ENCODE measurements at regions of chr5 and their contacts with region 1.

Region 1: DNA sequence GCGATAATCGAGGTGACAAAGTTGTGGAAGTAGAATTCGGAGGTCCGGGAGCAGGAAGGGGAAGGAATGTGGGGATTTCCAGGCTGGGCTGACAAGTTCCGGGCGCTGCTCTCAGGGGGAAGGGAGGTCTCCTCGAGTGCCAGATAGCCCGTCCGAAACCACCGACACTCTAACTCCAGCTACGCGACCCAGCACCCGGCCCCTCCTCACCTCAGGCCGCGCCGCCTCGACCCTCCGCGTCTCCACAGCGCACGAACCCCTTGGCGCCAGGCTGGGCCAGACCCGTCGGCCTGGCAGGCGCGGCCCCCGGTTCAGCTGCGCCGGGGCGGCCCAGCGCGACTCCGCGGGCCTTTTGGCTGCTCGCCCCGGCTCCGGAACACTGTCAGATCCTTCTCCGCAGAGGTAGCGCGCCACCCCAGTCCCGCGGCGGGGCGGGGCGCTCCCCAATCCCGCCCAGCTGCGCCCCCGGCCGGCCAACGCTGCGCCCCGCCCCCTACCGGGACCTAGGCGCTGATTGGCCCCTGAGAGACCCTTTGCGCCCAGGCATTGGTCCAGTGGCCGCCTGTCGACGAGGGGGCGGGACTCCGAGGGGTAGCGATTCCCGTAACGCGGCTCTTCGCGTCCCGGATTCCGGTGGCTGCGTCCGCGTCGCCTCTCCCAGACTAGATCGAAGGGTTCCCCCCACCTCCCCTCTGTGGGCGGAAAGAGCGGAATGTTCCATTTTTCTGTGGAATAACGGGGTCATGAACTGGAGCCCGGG is at the start of gene IL6ST:
- DNase-seq: peak; percentile 98
- ATAC-seq: peak; percentile 90
- H3K4me3 Mint-ChIP-seq: peak within 1 kb of the TSS; percentile 86
- H3K27ac Mint-ChIP-seq: peak within 1 kb of the TSS; percentile 97
- H3K4me1 Mint-ChIP-seq: peaks cover 60% of the 10 kb centered on the region
- H3K27me3 Mint-ChIP-seq: no peaks in the 10 kb centered on the region
- total RNA-seq, gene IL6ST: 57.1 to 64.4 TPM

Region 2: DNA sequence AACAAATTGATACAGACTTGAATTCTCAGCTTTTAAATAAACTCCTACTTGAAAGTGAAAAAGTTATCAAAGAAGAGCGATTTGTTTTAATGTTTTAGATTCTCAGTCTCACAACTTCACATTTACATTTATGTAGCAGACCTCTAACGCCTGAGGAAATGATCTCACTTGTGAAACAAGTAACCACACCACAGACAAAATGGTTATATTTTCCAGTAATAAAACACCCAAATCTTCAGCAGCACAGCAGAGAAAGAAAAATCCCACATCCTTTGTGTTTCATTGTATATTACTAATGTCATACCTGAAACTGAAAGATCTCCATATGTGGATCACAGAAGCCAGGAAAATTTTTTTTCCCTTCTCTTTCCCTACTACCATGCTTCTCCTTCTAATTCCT is 922.1 kb before region 1 on chr5:
- CTCF ChIA-PET with region 1: no interaction called
- POLR2A ChIA-PET with region 1: no interaction called
- intact Hi-C with region 1: loop called in 1 of 2 experiments (anchors 10 kb)
- DNase-seq: no peak
- ATAC-seq: peak; percentile 83
- H3K4me3 Mint-ChIP-seq: peak overlapping the region; percentile 23
- H3K27ac Mint-ChIP-seq: peak overlapping the region; percentile 52
- H3K4me1 Mint-ChIP-seq: peaks cover 33% of the 10 kb centered on the region
- H3K27me3 Mint-ChIP-seq: peaks cover 2% of the 10 kb centered on the region

Region 3: DNA sequence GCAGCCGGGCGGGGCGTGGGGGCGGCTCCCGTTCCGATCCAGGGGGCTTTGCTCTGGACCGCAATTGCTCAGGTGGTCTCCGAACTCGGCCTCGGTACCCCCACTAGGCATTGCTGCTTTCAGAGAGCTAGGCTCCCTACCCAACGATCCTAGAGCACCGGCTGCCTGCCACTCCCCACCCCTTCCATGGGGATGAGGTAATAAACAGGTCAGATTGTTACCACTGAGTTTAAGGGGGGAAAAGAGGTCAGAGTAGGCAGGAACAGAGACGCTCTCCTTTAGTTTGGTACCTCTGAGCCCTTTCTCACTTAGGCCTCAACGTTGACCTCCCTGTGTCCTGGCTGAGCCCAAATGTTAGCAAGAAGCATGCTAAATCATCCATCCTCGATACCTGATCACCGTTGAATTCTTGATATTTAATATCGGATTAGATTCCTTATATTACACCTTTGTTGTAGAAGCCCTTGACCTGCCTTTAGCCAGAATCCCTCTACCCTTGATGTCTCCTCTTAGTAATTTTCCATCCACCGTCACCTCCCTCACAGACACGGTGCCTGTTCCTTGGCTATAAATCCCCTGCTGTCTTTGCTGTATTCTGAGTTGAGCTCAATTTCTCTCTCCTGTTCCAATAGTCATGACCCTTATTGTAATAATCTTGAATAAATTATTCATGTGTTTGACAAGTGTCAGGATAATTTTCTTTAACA is 459.4 kb before region 1 on chr5:
- CTCF ChIA-PET with region 1: no interaction called
- POLR2A ChIA-PET with region 1: no interaction called
- intact Hi-C with region 1: no loop called
- DNase-seq: no peak
- ATAC-seq: peak; percentile 9
- H3K4me3 Mint-ChIP-seq: peak overlapping the region; percentile 79
- H3K27ac Mint-ChIP-seq: peak overlapping the region; percentile 88
- H3K4me1 Mint-ChIP-seq: peaks cover 32% of the 10 kb centered on the region
- H3K27me3 Mint-ChIP-seq: no peaks in the 10 kb centered on the region

Region 4: GRCh38 chr5:55711968-55712859 is 282.5 kb before region 1 on chr5 and contains the start of gene SLC38A9:
- CTCF ChIA-PET with region 1: no interaction called
- POLR2A ChIA-PET with region 1: no interaction called
- intact Hi-C with region 1: loop called in 1 of 2 experiments (anchors 1 kb)
- DNase-seq: peak; percentile 97
- ATAC-seq: peak; percentile 100
- H3K4me3 Mint-ChIP-seq: peak within 1 kb of the TSS; percentile 93
- H3K27ac Mint-ChIP-seq: peak within 1 kb of the TSS; percentile 92
- H3K4me1 Mint-ChIP-seq: peaks cover 24% of the 10 kb centered on the region
- H3K27me3 Mint-ChIP-seq: no peaks in the 10 kb centered on the region
- total RNA-seq, gene SLC38A9: 12.9 to 16.2 TPM

Region 5: GRCh38 chr5:56026863-56027300 is 32.1 kb after region 1 on chr5:
- CTCF ChIA-PET with region 1: no interaction called
- POLR2A ChIA-PET with region 1: interaction called, 4 read pairs
- intact Hi-C with region 1: loop called in 1 of 2 experiments (anchors 1 kb)
- DNase-seq: no peak
- ATAC-seq: peak; percentile 92
- H3K4me3 Mint-ChIP-seq: no peak overlapping the region
- H3K27ac Mint-ChIP-seq: no peak overlapping the region
- H3K4me1 Mint-ChIP-seq: peaks cover 16% of the 10 kb centered on the region
- H3K27me3 Mint-ChIP-seq: no peaks in the 10 kb centered on the region

Region 6: GRCh38 chr5:56088967-56089829 is 94.4 kb after region 1 on chr5:
- CTCF ChIA-PET with region 1: interaction called, 3 read pairs
- POLR2A ChIA-PET with region 1: interaction called, 10 read pairs
- intact Hi-C with region 1: loop called (anchors 2 to 5 kb)
- DNase-seq: peak; percentile 76
- ATAC-seq: peak; percentile 92
- H3K4me3 Mint-ChIP-seq: no peak overlapping the region
- H3K27ac Mint-ChIP-seq: peak overlapping the region; percentile 86
- H3K4me1 Mint-ChIP-seq: peaks cover 65% of the 10 kb centered on the region
- H3K27me3 Mint-ChIP-seq: no peaks in the 10 kb centered on the region

Region 7: DNA sequence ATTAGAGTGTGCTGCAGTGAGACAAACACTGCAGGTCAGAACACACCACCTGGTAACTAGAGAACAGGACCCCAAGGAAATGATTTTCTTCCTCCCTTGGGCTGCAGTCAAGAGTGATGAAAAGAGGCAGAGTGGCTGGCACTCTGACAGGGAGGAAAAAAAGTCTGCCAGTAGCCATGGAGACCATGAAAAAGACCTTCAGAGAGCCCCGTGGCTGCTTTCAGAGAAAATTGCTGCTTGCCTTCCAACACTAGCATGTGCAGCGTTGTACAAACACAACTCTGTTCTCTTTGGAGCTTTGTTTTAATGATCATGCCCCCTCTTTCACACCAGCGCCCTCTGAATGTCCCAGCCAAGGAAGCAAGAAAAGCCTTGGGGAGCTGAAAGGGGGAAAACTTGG is 169.6 kb after region 1 on chr5:
- CTCF ChIA-PET with region 1: no interaction called
- POLR2A ChIA-PET with region 1: interaction called, 10 read pairs
- intact Hi-C with region 1: no loop called
- DNase-seq: no peak
- ATAC-seq: no peak
- H3K4me3 Mint-ChIP-seq: no peak overlapping the region
- H3K27ac Mint-ChIP-seq: no peak overlapping the region
- H3K4me1 Mint-ChIP-seq: peaks cover 59% of the 10 kb centered on the region
- H3K27me3 Mint-ChIP-seq: no peaks in the 10 kb centered on the region

Region 8: DNA sequence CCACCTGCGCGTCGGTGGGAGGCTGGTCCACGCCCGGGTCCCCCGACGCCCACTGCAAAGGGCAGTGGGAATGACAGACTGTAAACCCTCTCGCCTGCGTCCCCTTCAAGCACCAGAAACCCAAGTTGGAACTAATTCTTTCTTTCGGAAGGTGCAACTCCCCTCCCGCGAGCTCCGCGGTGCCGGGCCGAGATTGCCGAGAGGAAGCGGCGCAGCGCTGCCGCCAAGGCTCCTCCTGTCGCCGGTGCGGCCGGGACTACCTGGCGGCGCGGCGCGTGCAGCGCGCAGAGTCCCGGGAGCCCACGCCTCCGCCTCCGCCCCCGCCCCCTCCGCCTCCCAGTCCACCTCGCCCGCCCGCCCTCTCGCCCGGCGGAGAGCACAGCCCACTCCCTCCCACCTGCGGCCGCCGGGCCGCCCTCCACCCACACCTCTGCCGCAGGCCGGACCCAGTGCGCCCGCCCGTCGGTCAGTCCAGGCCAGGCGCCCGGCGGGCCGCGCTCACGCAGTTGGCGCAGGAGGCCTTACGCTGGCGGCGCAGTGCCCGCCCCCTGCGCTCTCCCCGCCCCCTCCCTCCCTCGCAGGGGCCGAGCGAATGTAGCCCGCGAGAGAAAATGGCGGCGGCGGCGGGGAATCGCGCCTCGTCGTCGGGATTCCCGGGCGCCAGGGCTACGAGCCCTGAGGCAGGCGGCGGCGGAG is 820.4 kb after region 1 on chr5 and contains the start of gene MAP3K1:
- CTCF ChIA-PET with region 1: no interaction called
- POLR2A ChIA-PET with region 1: no interaction called
- intact Hi-C with region 1: loop called in 1 of 2 experiments (anchors 1 kb)
- DNase-seq: peak; percentile 86
- ATAC-seq: peak; percentile 57
- H3K4me3 Mint-ChIP-seq: peak within 1 kb of the TSS; percentile 76
- H3K27ac Mint-ChIP-seq: peak within 1 kb of the TSS; percentile 87
- H3K4me1 Mint-ChIP-seq: peaks cover 33% of the 10 kb centered on the region
- H3K27me3 Mint-ChIP-seq: no peaks in the 10 kb centered on the region
- total RNA-seq, gene MAP3K1: 22.3 to 22.9 TPM